Activated naive CD4-positive, alpha-beta T cell treated with anti-CD3 and anti-CD28 coated beads for 36 hours (primary cell): ENCODE measurements at regions of chr2 and their contacts with region 1.

Region 1: DNA sequence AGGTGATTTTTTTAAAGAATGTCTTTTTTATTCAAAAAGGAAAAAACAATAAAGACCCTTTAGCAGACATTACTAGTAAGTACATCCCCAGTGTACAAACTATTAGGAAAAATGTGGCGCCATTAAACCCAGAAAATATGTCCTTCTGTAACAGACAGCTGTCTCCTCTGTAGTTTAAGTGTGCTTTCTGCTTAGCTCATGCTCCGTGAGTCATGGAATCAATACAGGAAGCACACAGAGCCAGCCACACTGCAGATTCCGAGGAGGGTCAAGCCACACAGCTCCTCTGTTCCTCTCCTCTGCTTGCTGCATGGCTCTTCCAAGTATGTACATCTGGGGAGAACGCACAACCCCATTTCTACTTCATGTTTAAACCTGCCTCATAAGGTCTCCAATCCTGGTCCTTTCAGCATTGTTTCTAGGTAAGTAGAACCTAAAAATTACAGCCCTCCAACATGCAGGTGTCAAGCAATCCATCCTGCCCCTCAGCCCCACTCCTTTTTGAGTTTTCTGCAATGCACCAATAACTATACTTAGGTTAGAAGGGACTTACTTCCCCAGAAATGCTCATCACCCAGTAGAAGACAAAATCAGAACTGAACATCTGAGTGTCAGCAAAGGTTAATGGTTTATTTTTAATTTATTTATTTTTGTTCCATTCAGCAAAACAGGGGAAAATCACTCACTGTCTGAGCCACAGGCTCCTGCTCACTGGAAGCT is 37.5 kb downstream of the ACVR1 start:
- DNase-seq: peak; percentile 62
- H3K4me3 Mint-ChIP-seq: no peak overlapping the region
- H3K27ac Mint-ChIP-seq: peak overlapping the region; percentile 46
- H3K4me1 Mint-ChIP-seq: peaks cover 37% of the 10 kb centered on the region
- H3K27me3 Mint-ChIP-seq: no peaks in the 10 kb centered on the region

Region 2: DNA sequence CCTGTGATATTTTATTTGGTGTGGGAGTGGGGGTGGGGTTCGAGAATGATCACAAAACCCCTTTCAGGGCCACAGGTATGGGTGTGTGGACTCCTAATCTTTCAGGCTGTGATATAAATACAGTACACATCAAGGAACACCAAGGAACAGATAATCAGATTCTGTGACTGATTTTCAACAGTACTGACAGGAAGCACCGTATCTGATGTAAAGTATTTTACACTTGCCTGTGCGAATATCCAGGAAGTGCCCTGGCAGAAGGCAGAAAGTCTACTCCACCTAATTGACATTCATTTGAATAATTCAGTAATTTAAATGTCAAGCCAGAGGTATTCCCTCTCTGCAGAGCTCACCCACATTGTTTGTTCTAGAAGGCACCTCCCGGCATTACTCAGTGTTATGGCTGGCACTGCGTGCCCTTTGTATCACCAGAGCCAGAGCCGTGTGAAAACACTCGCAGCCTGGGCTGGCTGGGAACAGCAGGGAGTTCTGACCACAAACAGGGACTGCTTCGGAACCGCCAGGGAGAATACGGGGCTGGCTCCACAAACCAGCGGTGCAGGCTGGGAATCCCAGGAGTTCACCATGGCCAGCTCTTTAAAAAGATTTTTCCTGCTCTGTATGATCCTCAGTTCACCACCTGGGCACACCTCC is 54.3 kb before region 1 on chr2:
- CTCF ChIA-PET with region 1: interaction called, 4 read pairs
- intact Hi-C with region 1: loop called (anchors 1 kb)
- DNase-seq: peak; percentile 47
- H3K4me3 Mint-ChIP-seq: no peak overlapping the region
- H3K27ac Mint-ChIP-seq: peak overlapping the region; percentile 62
- H3K4me1 Mint-ChIP-seq: peaks cover 38% of the 10 kb centered on the region
- H3K27me3 Mint-ChIP-seq: no peaks in the 10 kb centered on the region

Region 3: GRCh38 chr2:157866202-157866601 is 27.6 kb after region 1 on chr2:
- CTCF ChIA-PET with region 1: interaction called, 6 read pairs
- intact Hi-C with region 1: loop called (anchors 2 kb)
- DNase-seq: no peak
- H3K4me3 Mint-ChIP-seq: no peak overlapping the region
- H3K27ac Mint-ChIP-seq: no peak overlapping the region
- H3K4me1 Mint-ChIP-seq: peaks cover 57% of the 10 kb centered on the region
- H3K27me3 Mint-ChIP-seq: no peaks in the 10 kb centered on the region